Activated CD4-positive, alpha-beta memory T cell treated with anti-CD3 and anti-CD28 coated beads for 36 hours (primary cell): ENCODE measurements at regions of chr5 and their contacts with region 1.

Region 1: GRCh38 chr5:119411935-119412602 is 40.2 kb upstream of the HSD17B4 start:
- DNase-seq: peak; percentile 55
- H3K4me3 Mint-ChIP-seq: peak overlapping the region; percentile 75
- H3K27ac Mint-ChIP-seq: peak overlapping the region; percentile 63
- H3K4me1 Mint-ChIP-seq: peaks cover 34% of the 10 kb centered on the region
- H3K27me3 Mint-ChIP-seq: no peaks in the 10 kb centered on the region

Region 2: DNA sequence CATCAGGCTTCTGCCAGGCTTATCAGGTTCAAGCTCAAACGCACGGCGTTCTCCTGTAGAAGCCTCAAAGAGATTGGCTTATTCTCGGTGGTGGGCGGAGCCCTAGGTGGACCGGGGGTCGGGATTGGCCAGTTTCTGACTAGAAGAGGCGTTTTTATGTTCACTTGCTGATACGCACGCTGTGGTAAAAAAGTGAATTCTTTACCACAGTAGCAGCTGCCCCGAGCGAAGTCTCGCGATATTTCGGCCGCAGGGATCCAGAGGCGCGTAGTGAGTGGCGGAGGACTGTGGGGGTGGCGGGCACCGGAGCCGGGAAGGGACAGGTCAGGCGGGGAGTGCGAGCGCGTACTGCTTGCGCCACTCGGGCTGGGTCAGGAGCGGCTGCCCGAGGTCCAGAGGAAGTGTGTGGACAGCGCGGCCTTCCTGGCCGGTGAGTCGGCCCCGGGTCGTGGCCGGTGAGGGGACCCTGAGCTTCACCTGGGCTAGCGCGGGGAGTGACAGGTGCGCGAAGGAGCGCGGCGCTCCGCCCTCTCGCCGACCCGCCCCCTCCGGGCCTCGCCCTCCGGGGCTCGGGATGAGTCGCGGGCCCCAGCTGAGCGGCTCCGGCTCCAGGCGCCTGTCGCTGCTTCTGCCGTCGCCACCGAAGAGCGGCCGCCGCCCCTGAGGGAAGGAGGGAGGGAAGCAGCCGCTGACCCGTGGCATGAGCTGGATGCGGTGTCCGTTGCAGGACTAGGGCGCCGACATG is 341.1 kb before region 1 on chr5 and contains the start of gene DMXL1:
- CTCF ChIA-PET with region 1: interaction called, 4 read pairs
- POLR2A ChIA-PET with region 1: interaction called, 3 read pairs
- intact Hi-C with region 1: loop called (anchors 1 kb)
- DNase-seq: peak; percentile 99
- H3K4me3 Mint-ChIP-seq: peak within 1 kb of the TSS; percentile 85
- H3K27ac Mint-ChIP-seq: peak within 1 kb of the TSS; percentile 96
- H3K4me1 Mint-ChIP-seq: peaks cover 40% of the 10 kb centered on the region
- H3K27me3 Mint-ChIP-seq: peaks cover 2% of the 10 kb centered on the region
- total RNA-seq, gene DMXL1: 24.2 to 26.9 TPM

Region 3: DNA sequence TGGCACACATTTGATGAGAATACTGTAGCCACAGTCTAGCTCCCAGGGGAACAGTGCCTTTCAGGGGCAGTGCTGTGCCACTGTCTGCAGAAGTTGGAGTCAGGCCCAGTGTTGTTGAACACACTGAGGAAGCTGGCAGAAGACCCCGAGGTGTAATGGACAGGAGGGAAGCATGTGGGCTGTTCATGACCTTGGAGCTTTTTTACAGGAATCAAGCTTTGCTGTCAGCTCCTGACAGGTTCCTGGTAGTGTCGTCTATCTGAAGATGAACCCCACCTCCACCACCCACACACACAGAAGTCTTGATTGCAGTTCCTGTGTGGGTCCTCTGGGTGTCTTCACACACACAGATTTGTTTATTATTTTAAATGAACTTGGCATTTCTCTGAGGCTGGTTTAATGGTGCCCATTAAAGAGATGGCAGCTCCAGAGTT is 96.5 kb before region 1 on chr5:
- CTCF ChIA-PET with region 1: interaction called, 43 read pairs
- POLR2A ChIA-PET with region 1: interaction called, 5 read pairs
- intact Hi-C with region 1: loop called (anchors 1 kb)
- DNase-seq: peak; percentile 78
- H3K4me3 Mint-ChIP-seq: peak overlapping the region; percentile 30
- H3K27ac Mint-ChIP-seq: peak overlapping the region; percentile 89
- H3K4me1 Mint-ChIP-seq: peaks cover 93% of the 10 kb centered on the region
- H3K27me3 Mint-ChIP-seq: no peaks in the 10 kb centered on the region

Region 4: DNA sequence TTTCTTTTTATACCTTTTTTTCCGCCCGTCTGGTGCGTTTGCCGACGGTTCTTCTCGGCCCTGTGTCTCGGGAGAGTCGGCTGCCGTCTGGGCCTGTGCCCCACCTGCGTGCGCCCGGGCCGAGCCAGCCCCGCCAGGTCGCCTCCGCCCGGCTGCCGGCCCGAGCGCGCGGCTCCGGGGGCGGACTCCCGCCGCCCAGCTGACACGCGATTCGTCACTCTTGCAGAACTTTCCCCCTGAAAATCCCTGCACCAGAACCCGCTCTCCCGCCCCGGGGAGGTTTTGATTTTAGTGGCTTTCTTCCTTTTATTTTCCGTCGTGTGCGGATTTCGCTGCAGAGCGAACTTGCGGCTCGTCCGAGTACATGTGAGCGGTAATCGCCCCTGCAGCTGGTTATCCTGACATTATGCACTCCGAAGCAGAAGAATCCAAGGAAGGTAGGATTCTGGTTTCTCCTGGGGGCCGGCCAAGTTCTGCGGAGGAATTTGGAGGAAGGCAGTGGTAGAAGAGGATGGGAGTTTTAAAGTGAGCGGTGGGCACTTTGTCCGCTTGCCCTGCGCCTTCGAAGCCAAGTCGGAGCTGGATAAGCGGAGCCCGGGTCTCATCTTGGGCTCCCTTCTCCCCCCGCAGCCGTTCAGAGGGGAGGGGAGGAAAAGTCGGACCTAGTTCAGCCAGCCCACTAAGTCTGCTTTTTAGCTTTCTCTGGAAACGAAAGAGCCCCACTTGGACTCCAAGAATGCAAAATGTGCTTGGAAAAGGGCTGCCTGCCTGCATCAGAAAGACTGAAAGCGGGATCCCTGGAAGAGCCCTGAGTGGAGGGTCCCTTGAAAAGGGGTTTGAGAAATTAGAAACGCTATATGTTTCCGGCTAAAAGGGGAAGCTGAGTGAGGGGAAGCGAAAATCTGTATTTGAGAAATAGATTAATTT is 56.1 kb before region 1 on chr5 and contains the start of gene TNFAIP8:
- CTCF ChIA-PET with region 1: interaction called, 17 read pairs
- POLR2A ChIA-PET with region 1: interaction called, 3 read pairs
- intact Hi-C with region 1: no loop called
- DNase-seq: peak; percentile 90
- H3K4me3 Mint-ChIP-seq: peak within 1 kb of the TSS; percentile 99
- H3K27ac Mint-ChIP-seq: peak within 1 kb of the TSS; percentile 90
- H3K4me1 Mint-ChIP-seq: peaks cover 71% of the 10 kb centered on the region
- H3K27me3 Mint-ChIP-seq: no peaks in the 10 kb centered on the region
- total RNA-seq, gene TNFAIP8: 153 to 159 TPM

Region 5: DNA sequence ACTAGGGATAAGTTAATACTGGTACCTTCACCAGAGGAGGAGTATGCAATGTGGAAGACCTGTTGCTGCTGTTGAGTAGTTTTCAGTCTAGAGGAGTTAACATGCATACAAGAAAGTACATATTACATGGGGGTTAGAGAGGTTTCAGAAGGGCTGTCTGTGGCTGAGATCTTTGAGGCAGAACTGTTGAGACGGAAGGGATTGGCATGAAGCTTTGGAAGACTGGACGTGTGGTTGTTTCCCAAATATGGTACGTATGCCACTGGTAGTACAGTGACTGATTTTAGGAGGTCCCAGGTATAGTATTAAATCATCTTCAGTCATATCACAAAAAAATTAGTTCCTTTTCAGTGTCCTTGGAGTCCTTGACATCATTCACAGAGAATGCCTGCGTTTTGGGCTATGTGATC is 38.6 kb before region 1 on chr5:
- CTCF ChIA-PET with region 1: interaction called, 30 read pairs
- POLR2A ChIA-PET with region 1: interaction called, 3 read pairs
- intact Hi-C with region 1: no loop called
- DNase-seq: no peak
- H3K4me3 Mint-ChIP-seq: no peak overlapping the region
- H3K27ac Mint-ChIP-seq: peak overlapping the region; percentile 62
- H3K4me1 Mint-ChIP-seq: peaks cover 72% of the 10 kb centered on the region
- H3K27me3 Mint-ChIP-seq: no peaks in the 10 kb centered on the region